Naive thymus-derived CD4-positive, alpha-beta T cell (primary cell): ENCODE measurements at regions of chr19 and their contacts with region 1.

Region 1: DNA sequence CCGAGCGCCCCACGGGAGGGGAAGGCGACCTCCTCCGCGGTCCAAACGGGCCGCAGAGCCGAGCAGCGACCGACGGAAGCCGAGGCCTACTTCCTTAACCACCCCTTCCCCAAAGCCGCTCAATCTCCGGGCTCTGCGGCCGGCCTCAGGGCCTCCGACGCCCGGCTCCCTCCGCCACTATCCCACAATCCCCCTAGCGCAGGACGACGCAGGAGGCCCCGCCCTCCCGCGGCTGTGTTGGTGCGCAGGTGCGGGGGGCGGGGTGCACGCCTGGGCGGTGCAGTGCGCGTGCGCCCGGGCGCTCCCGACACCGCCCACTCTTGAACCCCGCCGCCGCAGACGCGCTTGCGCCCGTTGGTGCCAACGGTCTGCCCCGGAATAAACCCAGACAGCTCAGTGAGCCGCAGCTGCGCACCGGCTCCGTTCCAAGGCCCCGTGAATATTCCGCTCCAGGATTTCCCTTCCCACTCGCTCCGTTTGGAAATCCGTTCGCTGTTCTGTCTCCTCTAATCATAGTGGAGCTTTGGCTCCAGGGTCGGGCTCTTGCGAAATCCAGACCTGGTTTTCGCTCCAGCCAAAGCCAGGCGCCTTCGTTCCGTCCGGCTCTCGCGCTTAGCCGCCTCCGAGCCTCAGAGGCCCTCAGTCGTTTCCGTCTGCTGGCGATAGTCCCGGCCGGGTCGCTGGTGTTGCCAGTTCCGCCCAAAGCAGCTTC is at the start of gene PPP6R1:
- DNase-seq: peak; percentile 92 to 97 (median 96)
- ATAC-seq: peak; percentile 91
- H3K4me3 ChIP-seq: peak within 1 kb of the TSS; percentile 87
- H3K4me3 Mint-ChIP-seq: peak within 1 kb of the TSS; percentile 89 to 99 (median 98)
- H3K27ac ChIP-seq: peak within 1 kb of the TSS; percentile 94
- H3K27ac Mint-ChIP-seq: peak within 1 kb of the TSS; percentile 97 to 99 (median 98)
- H3K4me1 ChIP-seq: peaks cover 31 to 43% of the 10 kb centered on the region in 2 donors
- H3K4me1 Mint-ChIP-seq: peaks cover 36 to 45% (median 41%) of the 10 kb centered on the region in 7 donors
- H3K27me3 ChIP-seq: no peaks in the 10 kb centered on the region
- H3K27me3 Mint-ChIP-seq: no peaks in the 10 kb centered on the region
- total RNA-seq, gene PPP6R1: 151 to 223 (median 168) TPM

Region 2: GRCh38 chr19:55216461-55217198 is 42.4 kb before region 1 on chr19:
- CTCF ChIA-PET with region 1: no interaction called
- POLR2A ChIA-PET with region 1: no interaction called
- intact Hi-C with region 1: loop called (anchors 2 to 5 kb)
- DNase-seq: peak in 8 of 9 donors; percentile 10 to 69 (median 32)
- ATAC-seq: peak; percentile 80
- H3K4me3 ChIP-seq: no peak overlapping the region
- H3K4me3 Mint-ChIP-seq: peak overlapping the region in 7 of 10 donors; percentile 16 to 66 (median 35)
- H3K27ac ChIP-seq: no peak overlapping the region
- H3K27ac Mint-ChIP-seq: peak overlapping the region in 2 of 9 donors; percentile 55 to 62
- H3K4me1 ChIP-seq: peaks cover 0 to 10% of the 10 kb centered on the region in 2 donors
- H3K4me1 Mint-ChIP-seq: peaks cover 11 to 18% (median 12%) of the 10 kb centered on the region in 7 donors
- H3K27me3 ChIP-seq: no peaks in the 10 kb centered on the region
- H3K27me3 Mint-ChIP-seq: peaks cover 5 to 31% (median 29%) of the 10 kb centered on the region in 5 donors

Region 3: DNA sequence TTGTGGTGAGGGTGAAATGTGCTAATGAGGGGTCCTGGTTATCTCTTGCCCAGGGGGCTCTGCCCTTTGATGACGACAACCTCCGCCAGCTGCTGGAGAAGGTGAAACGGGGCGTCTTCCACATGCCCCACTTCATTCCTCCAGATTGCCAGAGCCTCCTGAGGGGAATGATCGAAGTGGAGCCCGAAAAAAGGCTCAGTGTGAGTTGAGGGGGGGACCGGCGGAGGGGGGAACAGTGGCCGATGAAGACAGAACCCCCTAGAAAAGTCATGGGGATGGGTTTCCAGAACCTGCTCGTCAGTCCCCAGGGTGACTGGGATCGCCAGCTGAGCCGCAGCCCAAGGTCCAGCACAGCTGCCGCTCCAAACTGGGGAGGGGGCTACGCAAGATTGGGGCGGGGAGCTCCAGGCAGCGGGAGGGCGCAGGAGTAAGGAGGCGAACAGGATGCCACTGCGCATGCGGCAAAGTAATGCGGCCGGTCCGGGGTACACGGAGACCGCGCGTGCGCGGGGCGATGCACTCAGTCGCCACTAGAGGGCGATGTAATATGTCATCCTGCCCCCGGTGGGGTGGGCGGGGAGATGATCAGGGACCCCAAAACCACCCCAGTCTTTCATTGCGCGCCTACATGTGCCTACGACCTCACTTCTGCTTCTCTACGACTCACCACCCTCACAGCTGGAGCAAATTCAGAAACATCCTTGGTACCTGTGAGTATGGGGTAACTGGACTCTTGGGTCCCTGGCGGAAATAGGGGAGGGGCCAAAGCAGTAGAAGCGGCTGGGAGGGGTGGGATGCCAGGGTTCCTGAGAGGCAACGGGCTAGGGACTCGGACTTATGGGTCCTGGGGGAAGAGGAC is 42.7 kb after region 1 on chr19:
- CTCF ChIA-PET with region 1: interaction called, 8 read pairs
- POLR2A ChIA-PET with region 1: interaction called, 11 read pairs
- intact Hi-C with region 1: no loop called
- DNase-seq: peak; percentile 84 to 97 (median 91)
- ATAC-seq: peak; percentile 97
- H3K4me3 ChIP-seq: peak overlapping the region; percentile 61
- H3K4me3 Mint-ChIP-seq: peak overlapping the region; percentile 77 to 97 (median 88)
- H3K27ac ChIP-seq: peak overlapping the region; percentile 66
- H3K27ac Mint-ChIP-seq: peak overlapping the region; percentile 66 to 95 (median 84)
- H3K4me1 ChIP-seq: peaks cover 5 to 10% of the 10 kb centered on the region in 2 donors
- H3K4me1 Mint-ChIP-seq: peaks cover 0 to 17% (median 11%) of the 10 kb centered on the region in 7 donors
- H3K27me3 ChIP-seq: no peaks in the 10 kb centered on the region
- H3K27me3 Mint-ChIP-seq: peaks cover 0 to 3% (median 0%) of the 10 kb centered on the region in 5 donors

Region 4: GRCh38 chr19:55385740-55386529 is 127.0 kb after region 1 on chr19 and contains the start of gene RPL28:
- CTCF ChIA-PET with region 1: interaction called, 3 read pairs
- POLR2A ChIA-PET with region 1: interaction called, 20 read pairs
- intact Hi-C with region 1: loop called (anchors 1 kb)
- DNase-seq: peak; percentile 92 to 99 (median 99)
- ATAC-seq: peak; percentile 89
- H3K4me3 ChIP-seq: peak within 1 kb of the TSS; percentile 92
- H3K4me3 Mint-ChIP-seq: peak within 1 kb of the TSS; percentile 94 to 100 (median 100)
- H3K27ac ChIP-seq: peak within 1 kb of the TSS; percentile 91
- H3K27ac Mint-ChIP-seq: peak within 1 kb of the TSS; percentile 91 to 100 (median 99)
- H3K4me1 ChIP-seq: peaks cover 45 to 53% of the 10 kb centered on the region in 2 donors
- H3K4me1 Mint-ChIP-seq: peaks cover 41 to 79% (median 70%) of the 10 kb centered on the region in 7 donors
- H3K27me3 ChIP-seq: no peaks in the 10 kb centered on the region
- H3K27me3 Mint-ChIP-seq: peaks cover 0 to 3% (median 0%) of the 10 kb centered on the region in 5 donors
- total RNA-seq, gene RPL28: 2,549 to 3,799 (median 3,242) TPM

Region 5: DNA sequence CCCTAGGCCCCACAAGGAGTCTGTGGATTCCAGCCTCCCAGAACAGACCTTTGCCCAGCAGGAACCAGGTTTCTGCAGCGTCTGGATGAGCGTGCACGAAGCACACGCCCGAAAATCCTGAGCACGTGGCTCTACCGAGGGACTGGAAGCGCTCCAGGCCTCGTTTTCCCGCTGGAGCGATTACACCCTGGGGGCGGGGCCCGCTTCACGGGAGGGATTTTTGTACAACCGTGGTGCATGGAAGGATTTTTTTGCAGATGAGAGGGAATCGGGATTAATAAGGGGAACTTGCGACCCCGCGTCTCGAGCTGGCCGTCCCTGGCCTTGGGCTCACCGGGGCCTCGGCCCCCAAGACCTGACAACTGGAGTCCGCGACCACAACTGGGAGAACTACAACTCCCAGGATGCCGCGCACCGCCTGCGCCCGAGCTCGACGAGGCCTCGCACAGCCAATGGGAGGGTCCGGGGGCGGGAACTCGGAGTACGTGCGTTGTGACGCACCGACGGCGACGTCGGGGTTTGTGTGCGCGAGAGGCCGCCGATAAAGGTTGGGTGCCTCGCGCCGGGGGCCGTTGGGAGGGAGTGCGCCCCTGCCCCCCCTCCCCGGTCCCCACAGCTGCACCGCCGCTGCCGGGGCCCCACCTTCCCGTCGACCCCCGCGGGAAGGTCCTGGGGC is 217.3 kb after region 1 on chr19 and contains the start of gene ZNF628:
- CTCF ChIA-PET with region 1: no interaction called
- POLR2A ChIA-PET with region 1: interaction called, 12 read pairs
- intact Hi-C with region 1: loop called in 1 of 2 experiments (anchors 1 kb)
- DNase-seq: peak; percentile 88 to 98 (median 96)
- ATAC-seq: peak; percentile 96
- H3K4me3 ChIP-seq: peak within 1 kb of the TSS; percentile 96
- H3K4me3 Mint-ChIP-seq: peak within 1 kb of the TSS; percentile 83 to 93 (median 90)
- H3K27ac ChIP-seq: peak within 1 kb of the TSS; percentile 90
- H3K27ac Mint-ChIP-seq: peak within 1 kb of the TSS; percentile 81 to 95 (median 92)
- H3K4me1 ChIP-seq: peaks cover 14 to 15% of the 10 kb centered on the region in 2 donors
- H3K4me1 Mint-ChIP-seq: peaks cover 15 to 41% (median 29%) of the 10 kb centered on the region in 7 donors
- H3K27me3 ChIP-seq: no peaks in the 10 kb centered on the region
- H3K27me3 Mint-ChIP-seq: no peaks in the 10 kb centered on the region
- total RNA-seq, gene ZNF628: 6.6 to 27.2 (median 9.0) TPM

Region 6: GRCh38 chr19:55605207-55605636 is 346.2 kb after region 1 on chr19:
- CTCF ChIA-PET with region 1: no interaction called
- POLR2A ChIA-PET with region 1: interaction called, 3 read pairs
- intact Hi-C with region 1: loop called in 1 of 2 experiments (anchors 1 kb)
- DNase-seq: peak; percentile 90 to 99 (median 97)
- ATAC-seq: peak; percentile 87
- H3K4me3 ChIP-seq: peak overlapping the region; percentile 51
- H3K4me3 Mint-ChIP-seq: peak overlapping the region; percentile 78 to 98 (median 90)
- H3K27ac ChIP-seq: peak overlapping the region; percentile 90
- H3K27ac Mint-ChIP-seq: peak overlapping the region; percentile 77 to 96 (median 91)
- H3K4me1 ChIP-seq: peaks cover 7 to 18% of the 10 kb centered on the region in 2 donors
- H3K4me1 Mint-ChIP-seq: peaks cover 37 to 70% (median 64%) of the 10 kb centered on the region in 7 donors
- H3K27me3 ChIP-seq: no peaks in the 10 kb centered on the region
- H3K27me3 Mint-ChIP-seq: peaks cover 0 to 3% (median 0%) of the 10 kb centered on the region in 5 donors

Region 7: GRCh38 chr19:56140583-56141416 is 881.8 kb after region 1 on chr19 and contains the start of gene ZNF444:
- CTCF ChIA-PET with region 1: no interaction called
- POLR2A ChIA-PET with region 1: no interaction called
- intact Hi-C with region 1: loop called (anchors 2 to 10 kb)
- DNase-seq: peak; percentile 93 to 100 (median 100)
- ATAC-seq: peak; percentile 91
- H3K4me3 ChIP-seq: peak within 1 kb of the TSS; percentile 60
- H3K4me3 Mint-ChIP-seq: peak within 1 kb of the TSS; percentile 88 to 97 (median 92)
- H3K27ac ChIP-seq: peak within 1 kb of the TSS; percentile 85
- H3K27ac Mint-ChIP-seq: peak within 1 kb of the TSS; percentile 84 to 98 (median 91)
- H3K4me1 ChIP-seq: peaks cover 4 to 22% of the 10 kb centered on the region in 2 donors
- H3K4me1 Mint-ChIP-seq: peaks cover 27 to 49% (median 43%) of the 10 kb centered on the region in 7 donors
- H3K27me3 ChIP-seq: no peaks in the 10 kb centered on the region
- H3K27me3 Mint-ChIP-seq: peaks cover 0 to 4% (median 0%) of the 10 kb centered on the region in 5 donors
- total RNA-seq, gene ZNF444: 22.2 to 49.6 (median 35.7) TPM